BJ (cell line): ENCODE measurements at regions of chr7 and their contacts with region 1.

Region 1: GRCh38 chr7:44921607-44922359 is 36.5 kb upstream of the PURB start:
- DNase-seq: no peak
- H3K4me3 ChIP-seq: no peak overlapping the region
- H3K27me3 ChIP-seq: peaks cover under 1% of the 10 kb centered on the region; the same call in 1 of the 2 replicates
- CTCF ChIP-seq: peak; percentile 91

Region 2: DNA sequence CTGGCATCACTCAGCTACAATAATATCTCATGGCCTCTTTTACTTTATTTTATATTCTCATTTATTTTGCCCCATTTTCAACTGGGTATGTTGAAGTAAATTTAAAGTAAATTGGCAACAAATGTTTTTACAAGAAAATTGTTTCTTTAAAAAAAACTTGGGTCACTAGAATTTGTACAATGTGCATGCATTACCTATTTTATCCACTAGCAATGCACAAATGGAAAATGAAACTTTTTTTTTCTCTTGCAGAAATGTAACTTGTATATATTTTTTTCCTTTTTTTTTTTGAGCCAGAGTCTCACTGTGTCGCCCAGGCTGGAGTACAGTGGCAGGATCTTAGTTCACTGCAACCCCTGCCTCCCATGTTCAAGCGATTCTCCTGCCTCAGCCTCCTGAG is 63.6 kb before region 1 on chr7:
- CTCF ChIA-PET with region 1: interaction called, 26 read pairs
- POLR2A ChIA-PET with region 1: no interaction called
- DNase-seq: no peak
- H3K4me3 ChIP-seq: no peak overlapping the region
- H3K27me3 ChIP-seq: no peaks in the 10 kb centered on the region
- CTCF ChIP-seq: no peak

Region 3: DNA sequence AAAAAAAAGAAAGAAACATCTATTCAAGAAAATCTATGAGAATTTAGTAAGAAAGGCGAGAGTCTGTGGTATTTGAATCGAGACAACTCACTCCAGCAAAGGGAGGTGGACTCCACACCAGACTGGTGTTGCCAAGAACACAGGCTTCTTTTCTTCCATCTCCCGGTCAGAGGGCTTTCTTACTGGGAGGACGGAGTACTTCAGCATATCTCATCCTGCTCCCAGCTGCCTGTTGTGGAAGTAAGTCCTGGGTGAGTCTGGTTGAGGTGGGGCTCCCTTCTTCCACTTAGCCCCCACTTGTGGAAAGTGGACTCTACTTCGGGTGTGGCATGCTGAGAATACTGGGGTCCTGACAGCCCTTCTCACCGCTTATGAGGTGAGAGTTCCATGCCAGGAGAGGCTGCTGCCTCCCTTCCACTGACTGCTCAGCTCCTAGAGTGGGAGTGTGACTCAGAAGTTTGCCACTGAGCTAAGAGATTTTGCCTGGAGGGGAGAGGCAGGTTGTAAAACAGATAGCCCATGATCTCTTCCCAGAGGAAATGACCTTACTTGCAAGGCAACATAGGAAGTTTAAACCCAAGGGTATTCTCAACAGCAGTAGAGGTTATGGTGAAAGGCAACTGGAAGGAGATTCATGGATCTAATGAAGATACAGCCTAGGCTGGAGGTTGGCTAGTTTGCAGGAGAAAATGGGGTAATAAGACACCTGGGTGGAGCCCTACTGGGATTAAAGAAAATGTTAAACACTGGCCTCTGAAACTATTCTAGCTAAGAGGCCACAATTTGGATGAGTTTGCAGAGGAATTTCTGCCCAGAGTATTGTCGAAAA is 170.5 kb after region 1 on chr7:
- CTCF ChIA-PET with region 1: no interaction called
- POLR2A ChIA-PET with region 1: no interaction called
- DNase-seq: peak; percentile 33
- H3K4me3 ChIP-seq: no peak overlapping the region
- H3K27me3 ChIP-seq: no peaks in the 10 kb centered on the region
- CTCF ChIP-seq: no peak

Region 4: GRCh38 chr7:45105588-45106188 is 183.9 kb after region 1 on chr7:
- CTCF ChIA-PET with region 1: no interaction called
- POLR2A ChIA-PET with region 1: no interaction called
- DNase-seq: no peak
- H3K4me3 ChIP-seq: no peak overlapping the region
- H3K27me3 ChIP-seq: no peaks in the 10 kb centered on the region
- CTCF ChIP-seq: no peak